AG04450 (cell line): ENCODE measurements at regions of chr9 and their contacts with region 1.

Region 1: GRCh38 chr9:136807281-136808074 is at the start of gene RABL6:
- DNase-seq: no peak
- H3K4me3 ChIP-seq: peak within 1 kb of the TSS; percentile 78
- H3K27ac ChIP-seq: peak within 1 kb of the TSS; percentile 52
- H3K27me3 ChIP-seq: peaks cover under 1% of the 10 kb centered on the region
- CTCF ChIP-seq: no peak
- polyA plus RNA-seq, gene RABL6: 35.4 and 41.1 TPM in 2 replicates

Region 2: DNA sequence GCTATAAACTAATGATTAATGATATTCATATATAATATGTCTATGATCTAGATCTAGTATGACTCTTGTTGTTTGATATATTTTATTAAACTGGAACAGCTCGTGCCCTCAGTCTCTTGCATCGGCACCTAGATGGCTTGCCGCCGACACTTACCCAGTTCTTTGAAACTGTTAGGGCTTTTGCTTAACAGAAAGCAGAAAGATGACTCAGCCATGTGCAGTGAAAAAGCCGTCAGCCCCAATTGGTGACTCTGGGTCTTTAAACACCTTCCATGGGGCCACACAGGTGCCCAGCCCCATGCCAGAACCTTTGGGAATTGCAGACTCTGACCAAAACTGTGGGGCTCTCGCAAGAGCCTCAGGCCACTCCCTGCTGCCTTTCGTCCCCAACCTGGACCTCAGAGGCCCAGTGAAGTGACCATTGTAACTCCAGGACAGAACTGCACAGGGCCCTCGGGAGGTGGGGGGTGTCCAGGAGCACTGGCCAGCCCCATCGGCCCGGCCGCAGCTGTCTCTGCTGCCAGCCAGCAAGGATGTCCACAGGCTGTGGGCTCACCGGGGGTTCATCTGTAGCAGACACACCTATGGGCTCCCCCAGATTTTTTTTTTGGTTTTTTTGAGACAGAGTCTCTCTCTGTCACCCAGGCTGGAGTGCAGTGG is 72.5 kb before region 1 on chr9:
- CTCF ChIA-PET with region 1: no interaction called
- POLR2A ChIA-PET with region 1: no interaction called
- DNase-seq: no peak
- H3K4me3 ChIP-seq: no peak overlapping the region
- H3K27ac ChIP-seq: no peak overlapping the region
- H3K27me3 ChIP-seq: peaks cover 21% of the 10 kb centered on the region
- CTCF ChIP-seq: no peak

Region 3: GRCh38 chr9:136847827-136848392 is 40.4 kb after region 1 on chr9:
- CTCF ChIA-PET with region 1: interaction called, 10 read pairs
- POLR2A ChIA-PET with region 1: interaction called, 4 read pairs
- DNase-seq: peak; percentile 49
- H3K4me3 ChIP-seq: peak overlapping the region; percentile 85
- H3K27ac ChIP-seq: no peak overlapping the region
- H3K27me3 ChIP-seq: peaks cover 21% of the 10 kb centered on the region
- CTCF ChIP-seq: no peak